Activated T-helper 1 cell treated with anti-CD3 and anti-CD28 coated beads, Interleukin-12 subunit alpha, Interleukin-12 subunit beta, Interleukin-2, Interleukin-4 antibody, amounts not matched to agents 30 ng/mL and 10 ng/mL and 1 ng/mL, durations not matched to agents 14 hours and 24 hours and 36 hours (primary cell): ENCODE measurements at regions of chr14 and their contacts with region 1.

Region 1: DNA sequence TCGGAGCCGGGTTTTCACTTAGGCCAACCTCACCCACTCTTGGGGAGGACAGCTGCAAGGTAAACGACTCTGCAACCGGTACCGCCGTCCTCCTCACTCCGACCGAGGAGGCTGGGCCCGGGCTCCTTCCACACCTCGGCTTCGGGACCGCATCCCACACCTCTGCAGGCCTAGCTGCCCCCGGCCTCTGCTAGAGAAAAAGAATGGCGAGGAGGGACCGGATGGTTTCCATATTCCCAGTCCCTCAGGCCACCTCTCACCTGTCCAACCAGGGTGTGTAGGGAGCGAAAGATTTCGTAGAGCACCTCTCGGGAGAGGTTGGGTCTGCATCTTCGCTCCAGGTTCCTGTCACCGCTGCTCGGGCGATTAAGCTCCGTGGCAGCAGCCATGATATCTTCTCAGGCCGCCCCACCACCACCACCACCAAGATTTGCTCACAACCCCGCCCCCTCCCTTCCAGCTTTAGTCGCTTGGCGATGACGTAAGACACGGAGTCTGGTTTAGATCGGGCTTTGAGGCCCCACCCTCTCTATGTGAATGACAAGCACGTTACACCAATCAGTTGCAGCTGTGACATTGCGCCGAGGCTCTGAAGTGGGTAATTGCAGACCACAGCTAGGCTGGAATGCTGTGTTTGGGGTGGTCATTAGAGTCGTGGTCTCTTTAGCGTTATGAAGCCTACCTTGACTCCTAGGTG is at the start of gene MBIP:
- DNase-seq: peak; percentile 83
- H3K4me3 Mint-ChIP-seq: peak within 1 kb of the TSS; percentile 93
- H3K27ac Mint-ChIP-seq: peak within 1 kb of the TSS; percentile 92
- H3K4me1 Mint-ChIP-seq: peaks cover 41% of the 10 kb centered on the region
- H3K27me3 Mint-ChIP-seq: peaks cover 14% of the 10 kb centered on the region
- total RNA-seq, gene MBIP: 29.4 and 33.4 TPM in 2 replicates

Region 2: GRCh38 chr14:34539407-34540180 is 1780.8 kb before region 1 on chr14 and contains the start of gene EAPP:
- intact Hi-C with region 1: loop called (anchors 5 kb)
- DNase-seq: peak; percentile 93
- H3K4me3 Mint-ChIP-seq: peak within 1 kb of the TSS; percentile 98
- H3K27ac Mint-ChIP-seq: peak within 1 kb of the TSS; percentile 93
- H3K4me1 Mint-ChIP-seq: peaks cover 18% of the 10 kb centered on the region
- H3K27me3 Mint-ChIP-seq: no peaks in the 10 kb centered on the region
- total RNA-seq, gene EAPP: 34.4 and 35.1 TPM in 2 replicates

Region 3: GRCh38 chr14:35932659-35933322 is 387.6 kb before region 1 on chr14:
- intact Hi-C with region 1: loop called (anchors 1 kb)
- DNase-seq: peak; percentile 31
- H3K4me3 Mint-ChIP-seq: peak overlapping the region; percentile 72
- H3K27ac Mint-ChIP-seq: peak overlapping the region; percentile 7
- H3K4me1 Mint-ChIP-seq: peaks cover 35% of the 10 kb centered on the region
- H3K27me3 Mint-ChIP-seq: peaks cover 2% of the 10 kb centered on the region

Region 4: GRCh38 chr14:36300337-36300736 is 20.0 kb before region 1 on chr14:
- intact Hi-C with region 1: no loop called
- DNase-seq: no peak
- H3K4me3 Mint-ChIP-seq: no peak overlapping the region
- H3K27ac Mint-ChIP-seq: no peak overlapping the region
- H3K4me1 Mint-ChIP-seq: no peaks in the 10 kb centered on the region
- H3K27me3 Mint-ChIP-seq: no peaks in the 10 kb centered on the region